CD8-positive, alpha-beta T cell (primary cell): ENCODE measurements at regions of chr7 and their contacts with region 1.

Region 1: DNA sequence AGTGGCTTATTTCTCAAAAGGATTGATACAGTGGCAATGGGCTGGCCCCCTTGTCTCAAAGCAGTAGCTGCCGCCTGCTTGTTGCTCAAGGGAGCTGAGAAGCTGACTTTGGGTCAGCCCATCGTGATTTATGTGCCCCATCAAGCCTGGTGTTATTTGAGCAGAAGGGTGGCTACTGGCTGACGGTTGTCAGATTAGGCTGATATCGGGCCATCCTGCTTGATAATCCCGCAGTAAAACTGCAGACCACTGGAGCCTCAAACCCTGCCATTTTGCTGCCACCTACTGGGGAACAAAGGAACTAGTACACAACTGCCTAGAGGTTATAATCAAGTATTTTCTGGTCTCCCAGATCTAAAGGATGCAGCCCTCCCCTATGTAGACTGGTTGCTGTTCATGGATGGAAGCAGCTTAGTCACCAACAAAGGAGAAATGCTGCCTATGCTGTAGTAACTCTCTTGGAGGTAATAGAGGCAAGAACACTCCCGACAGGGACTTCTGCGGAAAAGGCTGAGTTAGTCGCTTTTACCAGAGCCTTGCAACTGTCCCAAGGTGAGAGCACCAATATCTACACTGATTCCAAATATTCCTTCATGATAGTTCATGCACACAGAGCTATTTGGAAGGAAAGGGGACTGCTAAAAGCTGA is 65.9 kb upstream of the ZNF92 start:
- DNase-seq: peak in 8 of 9 experiments; percentile 13 to 72 (median 55)
- ATAC-seq: peak; percentile 63
- H3K4me3 ChIP-seq: no peak overlapping the region
- H3K4me3 Mint-ChIP-seq: no peak overlapping the region
- H3K27ac ChIP-seq: no peak overlapping the region
- H3K27ac Mint-ChIP-seq: no peak overlapping the region
- H3K4me1 ChIP-seq: no peaks in the 10 kb centered on the region
- H3K4me1 Mint-ChIP-seq: no peaks in the 10 kb centered on the region
- H3K27me3 ChIP-seq: no peaks in the 10 kb centered on the region
- H3K27me3 Mint-ChIP-seq: peaks cover 15% of the 10 kb centered on the region
- CTCF ChIP-seq: peak; percentile 77

Region 2: GRCh38 chr7:64528770-64529169 is 779.0 kb before region 1 on chr7:
- CTCF ChIA-PET with region 1: no interaction called
- POLR2A ChIA-PET with region 1: no interaction called
- intact Hi-C with region 1: no loop called
- DNase-seq: no peak
- ATAC-seq: no peak
- H3K4me3 ChIP-seq: peak overlapping the region in 1 of 2 experiments; percentile 5
- H3K4me3 Mint-ChIP-seq: no peak overlapping the region
- H3K27ac ChIP-seq: no peak overlapping the region
- H3K27ac Mint-ChIP-seq: no peak overlapping the region
- H3K4me1 ChIP-seq: no peaks in the 10 kb centered on the region
- H3K4me1 Mint-ChIP-seq: peaks cover 14% of the 10 kb centered on the region
- H3K27me3 ChIP-seq: no peaks in the 10 kb centered on the region
- H3K27me3 Mint-ChIP-seq: no peaks in the 10 kb centered on the region
- CTCF ChIP-seq: no peak

Region 3: GRCh38 chr7:64636386-64636785 is 671.4 kb before region 1 on chr7:
- CTCF ChIA-PET with region 1: no interaction called
- POLR2A ChIA-PET with region 1: no interaction called
- intact Hi-C with region 1: loop called in 1 of 2 experiments (anchors 5 kb)
- DNase-seq: peak in 3 of 9 experiments; percentile 14 to 35 (median 32)
- ATAC-seq: no peak
- H3K4me3 ChIP-seq: no peak overlapping the region
- H3K4me3 Mint-ChIP-seq: no peak overlapping the region
- H3K27ac ChIP-seq: no peak overlapping the region
- H3K27ac Mint-ChIP-seq: no peak overlapping the region
- H3K4me1 ChIP-seq: no peaks in the 10 kb centered on the region
- H3K4me1 Mint-ChIP-seq: no peaks in the 10 kb centered on the region
- H3K27me3 ChIP-seq: no peaks in the 10 kb centered on the region
- H3K27me3 Mint-ChIP-seq: no peaks in the 10 kb centered on the region
- CTCF ChIP-seq: no peak

Region 4: GRCh38 chr7:64887756-64888508 is 419.8 kb before region 1 on chr7:
- CTCF ChIA-PET with region 1: interaction called, 8 read pairs
- POLR2A ChIA-PET with region 1: no interaction called
- intact Hi-C with region 1: loop called in 1 of 2 experiments (anchors 5 kb)
- DNase-seq: peak in 8 of 9 experiments; percentile 27 to 73 (median 62)
- ATAC-seq: peak; percentile 84
- H3K4me3 ChIP-seq: peak overlapping the region; percentile 59 to 61
- H3K4me3 Mint-ChIP-seq: peak overlapping the region; percentile 88
- H3K27ac ChIP-seq: peak overlapping the region in 1 of 2 experiments; percentile 15
- H3K27ac Mint-ChIP-seq: no peak overlapping the region
- H3K4me1 ChIP-seq: peaks cover 19% of the 10 kb centered on the region
- H3K4me1 Mint-ChIP-seq: peaks cover 11% of the 10 kb centered on the region
- H3K27me3 ChIP-seq: peaks cover 11 to 21% of the 10 kb centered on the region in 2 experiments
- H3K27me3 Mint-ChIP-seq: peaks cover 62% of the 10 kb centered on the region
- CTCF ChIP-seq: peak; percentile 73

Region 5: GRCh38 chr7:64951250-64951848 is 356.4 kb before region 1 on chr7:
- CTCF ChIA-PET with region 1: interaction called, 98 read pairs
- POLR2A ChIA-PET with region 1: no interaction called
- intact Hi-C with region 1: loop called (anchors 1 kb)
- DNase-seq: peak in 2 of 9 experiments; percentile 54 to 62
- ATAC-seq: peak; percentile 74
- H3K4me3 ChIP-seq: no peak overlapping the region
- H3K4me3 Mint-ChIP-seq: no peak overlapping the region
- H3K27ac ChIP-seq: no peak overlapping the region
- H3K27ac Mint-ChIP-seq: no peak overlapping the region
- H3K4me1 ChIP-seq: peaks cover 8% of the 10 kb centered on the region
- H3K4me1 Mint-ChIP-seq: peaks cover 5% of the 10 kb centered on the region
- H3K27me3 ChIP-seq: peaks cover 13 to 15% of the 10 kb centered on the region in 2 experiments
- H3K27me3 Mint-ChIP-seq: peaks cover 43% of the 10 kb centered on the region
- CTCF ChIP-seq: peak; percentile 88

Region 6: DNA sequence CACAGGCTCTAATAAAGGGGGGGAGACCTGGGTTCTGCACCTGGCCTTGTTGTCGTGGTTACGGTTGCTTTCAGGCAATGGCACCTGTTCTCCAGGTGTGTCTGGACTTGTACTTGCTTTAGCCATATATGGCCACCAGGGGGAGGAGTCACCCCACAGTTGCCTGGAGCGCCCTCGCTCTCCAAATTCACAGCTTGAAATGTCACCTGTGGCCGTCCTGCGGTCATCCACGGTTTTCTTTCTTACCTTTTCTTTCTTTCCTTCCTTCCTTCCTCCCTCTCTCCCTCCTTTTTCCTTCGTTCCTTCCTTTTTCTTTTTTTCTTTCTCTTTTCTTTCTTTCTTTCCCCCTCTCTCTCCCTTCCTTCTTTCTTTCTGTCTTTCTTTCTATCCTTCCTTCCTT is 91.3 kb before region 1 on chr7:
- CTCF ChIA-PET with region 1: interaction called, 16 read pairs
- POLR2A ChIA-PET with region 1: interaction called, 3 read pairs
- intact Hi-C with region 1: loop called in 1 of 2 experiments (anchors 1 kb)
- DNase-seq: peak; percentile 28 to 78 (median 62)
- ATAC-seq: peak; percentile 61
- H3K4me3 ChIP-seq: no peak overlapping the region
- H3K4me3 Mint-ChIP-seq: no peak overlapping the region
- H3K27ac ChIP-seq: no peak overlapping the region
- H3K27ac Mint-ChIP-seq: no peak overlapping the region
- H3K4me1 ChIP-seq: no peaks in the 10 kb centered on the region
- H3K4me1 Mint-ChIP-seq: peaks cover 3% of the 10 kb centered on the region
- H3K27me3 ChIP-seq: no peaks in the 10 kb centered on the region
- H3K27me3 Mint-ChIP-seq: peaks cover 4% of the 10 kb centered on the region
- CTCF ChIP-seq: peak; percentile 64

Region 7: GRCh38 chr7:65325793-65326432 is 18.1 kb after region 1 on chr7:
- CTCF ChIA-PET with region 1: interaction called, 13 read pairs
- POLR2A ChIA-PET with region 1: no interaction called
- intact Hi-C with region 1: no loop called
- DNase-seq: peak in 1 of 9 experiments; percentile 4
- ATAC-seq: no peak
- H3K4me3 ChIP-seq: no peak overlapping the region
- H3K4me3 Mint-ChIP-seq: no peak overlapping the region
- H3K27ac ChIP-seq: no peak overlapping the region
- H3K27ac Mint-ChIP-seq: no peak overlapping the region
- H3K4me1 ChIP-seq: no peaks in the 10 kb centered on the region
- H3K4me1 Mint-ChIP-seq: no peaks in the 10 kb centered on the region
- H3K27me3 ChIP-seq: no peaks in the 10 kb centered on the region
- H3K27me3 Mint-ChIP-seq: no peaks in the 10 kb centered on the region
- CTCF ChIP-seq: no peak